Adrenal gland (tissue), 19 donors: ENCODE measurements at regions of chr6 and their contacts with region 1.

Region 1: DNA sequence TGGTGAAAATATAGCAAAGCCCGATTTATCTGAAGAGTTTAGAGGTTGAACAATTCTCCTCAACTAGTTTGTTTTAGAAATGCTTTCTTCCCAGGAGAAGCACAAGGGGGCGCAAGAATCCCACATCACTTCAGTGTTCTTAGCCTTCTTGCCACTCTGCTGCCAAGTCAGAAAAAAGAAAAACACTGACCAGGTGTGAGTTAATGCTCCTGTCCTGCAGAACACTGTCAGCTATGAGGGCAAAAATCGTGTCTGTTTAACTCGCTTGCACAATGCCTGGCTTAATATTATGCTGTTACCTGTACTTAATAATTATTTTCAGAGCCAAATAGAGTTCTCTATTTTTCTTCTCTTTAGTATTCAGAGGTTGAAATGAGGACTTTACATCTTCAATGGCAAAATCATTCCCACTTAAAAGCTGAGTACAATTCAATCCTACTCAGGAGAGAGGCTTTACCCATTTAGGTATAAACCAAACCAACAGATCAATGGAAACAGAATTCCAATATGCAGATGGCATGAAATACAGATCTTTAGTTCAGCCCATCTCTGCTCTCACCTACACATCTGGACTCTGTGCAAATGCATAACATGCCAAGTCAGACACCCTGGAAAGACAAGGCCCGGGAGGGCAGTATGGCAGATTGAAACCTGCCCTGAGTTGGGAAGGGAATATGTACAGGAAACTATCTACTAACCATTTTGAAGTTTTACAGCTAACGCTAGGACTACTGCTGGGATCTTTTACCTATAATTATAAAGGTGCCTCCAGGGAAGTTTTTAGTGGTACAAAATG is 71.4 kb upstream of the TULP1 start:
- DNase-seq: peak; percentile 61 to 89 (median 74)
- H3K4me3 ChIP-seq: no peak overlapping the region
- H3K27ac ChIP-seq: peak overlapping the region in 2 of 5 donors; percentile 3 to 45
- H3K4me1 ChIP-seq: peaks cover 7 to 60% of the 10 kb centered on the region in 2 donors
- H3K27me3 ChIP-seq: no peaks in the 10 kb centered on the region
- CTCF ChIP-seq: peak; percentile 61 to 88 (median 85)
- POLR2A ChIP-seq: no peak

Region 2: GRCh38 chr6:35445696-35446095 is 138.4 kb before region 1 on chr6:
- intact Hi-C with region 1: no loop called
- DNase-seq: no peak
- H3K4me3 ChIP-seq: no peak overlapping the region
- H3K27ac ChIP-seq: no peak overlapping the region
- H3K4me1 ChIP-seq: peaks cover 0 to 3% of the 10 kb centered on the region in 2 donors
- H3K27me3 ChIP-seq: no peaks in the 10 kb centered on the region
- CTCF ChIP-seq: no peak
- POLR2A ChIP-seq: no peak

Region 3: GRCh38 chr6:35512438-35513155 is 71.5 kb before region 1 on chr6 and contains the start of gene TULP1:
- intact Hi-C with region 1: no loop called
- DNase-seq: no peak
- H3K4me3 ChIP-seq: peak within 1 kb of the TSS in 1 of 4 donors; percentile 29
- H3K27ac ChIP-seq: no peak within 1 kb of the TSS
- H3K4me1 ChIP-seq: no peaks in the 10 kb centered on the region
- H3K27me3 ChIP-seq: peaks cover 10% of the 10 kb centered on the region
- CTCF ChIP-seq: no peak
- POLR2A ChIP-seq: no peak
- total RNA-seq, gene TULP1: 0.06 TPM in 1 of 9 donors, not detected in the others

Region 4: GRCh38 chr6:35624341-35625070 is 40.4 kb after region 1 on chr6:
- intact Hi-C with region 1: loop called in 1 of 2 experiments (anchors 5 kb)
- DNase-seq: no peak
- H3K4me3 ChIP-seq: no peak overlapping the region
- H3K27ac ChIP-seq: peak overlapping the region in 4 of 5 donors; percentile 10 to 68 (median 56)
- H3K4me1 ChIP-seq: peaks cover 33 to 56% of the 10 kb centered on the region in 2 donors
- H3K27me3 ChIP-seq: no peaks in the 10 kb centered on the region
- CTCF ChIP-seq: peak in 5 of 6 experiments; percentile 40 to 55 (median 47)
- POLR2A ChIP-seq: no peak

Region 5: GRCh38 chr6:35688581-35689322 is 104.7 kb after region 1 on chr6 and contains the start of gene FKBP5:
- intact Hi-C with region 1: loop called in 1 of 2 experiments (anchors 10 kb)
- DNase-seq: peak; percentile 92 to 98 (median 96)
- H3K4me3 ChIP-seq: peak within 1 kb of the TSS; percentile 62 to 86 (median 75)
- H3K27ac ChIP-seq: peak within 1 kb of the TSS; percentile 71 to 97 (median 90)
- H3K4me1 ChIP-seq: peaks cover 16 to 43% of the 10 kb centered on the region in 2 donors
- H3K27me3 ChIP-seq: no peaks in the 10 kb centered on the region
- CTCF ChIP-seq: peak in 1 of 6 experiments; percentile 9
- POLR2A ChIP-seq: peak; percentile 95 to 97
- total RNA-seq, gene FKBP5: 19.7 to 234 (median 120) TPM